Heart left ventricle (tissue), 16 donors: ENCODE measurements at regions of chr1 and their contacts with region 1.

Region 1: DNA sequence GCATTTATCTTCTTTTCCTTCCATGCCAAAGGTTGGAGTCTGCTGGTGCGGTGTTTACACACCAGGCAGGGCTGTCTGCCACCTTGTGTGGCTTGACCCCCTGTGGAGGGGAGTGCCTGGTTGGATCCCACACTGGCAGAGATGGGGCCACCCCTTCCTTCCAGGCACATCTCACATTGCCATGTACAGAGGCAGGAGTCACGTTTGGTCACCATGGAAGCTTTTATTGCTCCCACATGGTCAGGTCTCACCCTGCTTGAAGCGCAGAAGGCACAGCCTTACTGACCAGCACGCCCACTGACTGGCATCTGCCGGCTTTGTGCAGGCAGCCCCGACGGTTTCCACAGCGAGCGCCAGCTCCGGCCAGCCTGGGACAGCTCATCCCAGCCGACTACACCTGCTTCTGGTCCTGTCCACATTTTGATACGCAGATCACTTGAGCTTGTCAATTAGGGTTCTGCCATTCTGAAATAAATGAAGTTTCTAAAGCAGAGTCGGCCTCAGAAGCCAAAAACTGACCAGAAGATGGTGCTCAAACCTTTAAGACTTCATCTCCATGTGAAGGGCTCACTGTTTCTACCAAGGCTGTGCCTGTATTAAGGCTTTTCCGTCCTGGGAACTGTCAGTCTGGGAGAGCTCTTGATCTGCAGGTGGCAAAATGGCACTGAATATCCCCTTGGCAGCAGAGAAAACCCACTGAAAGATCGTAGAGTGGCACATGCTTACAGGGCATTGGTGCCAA is 35.6 kb upstream of the EPHA8 start:
- DNase-seq: no peak
- ATAC-seq: no peak
- H3K4me3 ChIP-seq: no peak overlapping the region
- H3K27ac ChIP-seq: no peak overlapping the region
- H3K4me1 ChIP-seq: peaks cover 0 to 29% (median 16%) of the 10 kb centered on the region in 12 donors
- H3K27me3 ChIP-seq: no peaks in the 10 kb centered on the region
- CTCF ChIP-seq: peak in 5 of 12 donors; percentile 7 to 27 (median 19)
- POLR2A ChIP-seq: no peak

Region 2: DNA sequence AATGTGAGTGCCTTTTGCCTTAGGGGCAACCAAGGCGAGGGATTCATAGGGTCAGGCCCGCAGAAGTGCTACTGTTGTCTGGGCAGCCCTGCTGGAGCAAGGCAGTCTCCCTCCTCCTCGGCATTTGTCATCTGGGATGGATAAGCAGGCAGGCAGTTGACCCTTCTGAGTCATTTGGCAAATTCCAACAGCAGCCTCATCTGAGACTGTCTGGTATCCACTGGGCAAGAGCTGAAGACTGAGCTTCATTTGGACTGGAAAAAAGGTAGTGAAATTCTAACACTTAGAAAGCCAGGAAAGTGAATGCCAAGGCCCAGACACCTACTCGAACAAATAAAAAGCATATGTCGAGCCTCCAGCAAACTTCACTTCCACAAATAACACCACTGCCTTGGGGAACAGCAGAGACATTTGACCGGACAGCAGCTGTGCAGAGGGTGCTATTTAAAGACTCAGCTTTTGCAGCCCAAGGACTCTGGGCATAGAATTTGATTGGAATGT is 80.1 kb before region 1 on chr1:
- intact Hi-C with region 1: no loop called
- DNase-seq: peak in 1 of 5 donors; percentile 39
- ATAC-seq: peak in 1 of 4 donors; percentile 40
- H3K4me3 ChIP-seq: no peak overlapping the region
- H3K27ac ChIP-seq: peak overlapping the region; percentile 51 to 87 (median 71)
- H3K4me1 ChIP-seq: peaks cover 0 to 26% (median 16%) of the 10 kb centered on the region in 12 donors
- H3K27me3 ChIP-seq: no peaks in the 10 kb centered on the region
- CTCF ChIP-seq: no peak
- POLR2A ChIP-seq: no peak

Region 3: DNA sequence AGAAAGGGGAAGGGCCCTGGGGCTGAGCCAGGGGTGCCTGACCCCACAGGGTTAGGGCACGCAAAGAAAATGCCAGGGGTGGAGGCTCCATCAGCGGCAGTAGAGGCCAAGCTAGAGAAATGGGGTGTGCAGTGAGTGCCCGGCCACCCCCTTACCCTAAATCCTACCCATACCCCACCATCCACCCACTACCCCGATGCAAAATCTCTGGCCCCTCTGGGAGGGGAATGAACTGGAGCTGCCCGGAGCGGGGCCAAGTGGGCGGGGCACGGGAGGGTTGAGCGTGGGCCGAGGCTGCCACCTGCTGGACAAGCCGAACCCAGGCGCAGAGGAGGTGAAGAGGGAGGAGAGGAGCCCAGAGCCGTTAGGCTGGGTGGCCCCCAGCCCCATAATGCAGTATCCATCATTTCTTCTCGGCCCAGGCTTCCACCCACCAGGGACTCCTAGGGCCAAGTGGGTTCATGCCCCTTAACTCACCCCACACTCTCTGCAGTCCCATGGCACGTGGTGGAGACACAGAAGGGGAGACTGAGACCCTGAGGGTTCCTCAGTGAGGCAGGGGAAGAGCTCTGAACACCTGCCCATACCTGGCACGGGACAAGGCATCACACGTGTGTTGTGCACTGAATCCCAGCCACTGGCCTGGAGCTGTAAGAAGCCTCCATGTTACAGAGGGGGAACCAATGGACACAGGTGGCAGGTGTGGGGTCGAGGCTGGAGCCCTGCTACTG is 114.3 kb after region 1 on chr1:
- intact Hi-C with region 1: loop called in 8 of 10 experiments (anchors 2 to 10 kb)
- DNase-seq: peak; percentile 77 to 93 (median 85)
- ATAC-seq: peak; percentile 59 to 88 (median 81)
- H3K4me3 ChIP-seq: no peak overlapping the region
- H3K27ac ChIP-seq: peak overlapping the region in 2 of 12 donors; percentile 9 to 75
- H3K4me1 ChIP-seq: peaks cover 0 to 20% (median 0%) of the 10 kb centered on the region in 12 donors
- H3K27me3 ChIP-seq: peaks cover 0 to 26% (median 0%) of the 10 kb centered on the region in 9 donors
- CTCF ChIP-seq: peak; percentile 79 to 96 (median 90)
- POLR2A ChIP-seq: no peak